Breast epithelium (tissue), 4 donors: ENCODE measurements at regions of chr12 and their contacts with region 1.

Region 1: DNA sequence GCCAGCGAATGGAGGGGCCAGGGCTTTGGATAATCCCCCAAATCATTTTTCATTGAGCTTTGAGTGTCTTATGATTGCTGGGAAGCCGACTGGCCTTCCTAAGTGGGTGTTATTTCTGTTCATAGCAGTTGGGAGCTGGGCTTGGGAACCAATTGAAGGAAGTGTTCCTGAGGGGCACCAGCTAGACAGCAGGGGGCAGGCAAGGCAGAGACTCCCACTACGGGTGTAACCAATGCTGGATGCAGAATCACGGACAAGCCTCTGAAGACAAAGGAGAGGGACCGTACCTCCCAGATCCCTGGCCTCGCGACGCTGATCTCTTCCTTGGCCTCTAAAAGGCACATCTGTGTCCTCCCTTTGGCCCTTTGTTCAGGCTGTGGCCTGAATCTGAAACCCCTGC is 148.9 kb upstream of the PRMT8 start:
- DNase-seq: no peak
- H3K4me3 ChIP-seq: no peak overlapping the region
- H3K27ac ChIP-seq: no peak overlapping the region
- H3K4me1 ChIP-seq: peaks cover 0 to 5% of the 10 kb centered on the region in 2 donors
- H3K27me3 ChIP-seq: no peaks in the 10 kb centered on the region
- CTCF ChIP-seq: no peak
- POLR2A ChIP-seq: no peak

Region 2: DNA sequence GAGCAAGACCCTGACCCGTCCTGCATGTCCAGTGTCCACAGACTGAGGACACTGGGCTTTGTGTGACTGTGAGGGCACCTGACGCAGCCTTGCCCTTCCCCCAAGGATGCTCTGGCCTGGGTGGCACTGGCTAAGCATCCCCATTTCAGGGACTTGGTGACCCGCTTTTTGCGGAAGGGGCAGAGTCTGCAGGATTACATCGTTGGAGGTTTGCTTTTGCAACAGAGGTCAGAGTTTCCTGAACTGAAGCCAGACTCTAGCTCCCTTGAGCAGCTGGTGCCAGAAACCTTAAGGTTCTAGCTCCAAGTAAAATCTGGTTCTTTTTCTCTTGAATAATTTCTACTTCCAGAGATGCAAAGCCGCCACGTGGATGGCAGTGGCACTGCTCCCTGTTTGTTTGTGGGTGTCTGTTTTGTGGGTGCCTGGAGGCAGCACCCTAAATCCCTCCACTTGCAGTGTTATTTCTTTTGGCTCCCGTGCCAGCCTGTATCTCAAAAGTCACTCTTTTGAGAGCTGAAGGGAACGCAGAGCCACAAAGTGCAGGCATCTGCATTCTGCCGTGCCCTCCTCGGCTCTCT is 80.2 kb before region 1 on chr12:
- intact Hi-C with region 1: loop called (anchors 2 kb)
- DNase-seq: no peak
- H3K4me3 ChIP-seq: no peak overlapping the region
- H3K27ac ChIP-seq: no peak overlapping the region
- H3K4me1 ChIP-seq: no peaks in the 10 kb centered on the region
- H3K27me3 ChIP-seq: no peaks in the 10 kb centered on the region
- CTCF ChIP-seq: no peak
- POLR2A ChIP-seq: no peak

Region 3: DNA sequence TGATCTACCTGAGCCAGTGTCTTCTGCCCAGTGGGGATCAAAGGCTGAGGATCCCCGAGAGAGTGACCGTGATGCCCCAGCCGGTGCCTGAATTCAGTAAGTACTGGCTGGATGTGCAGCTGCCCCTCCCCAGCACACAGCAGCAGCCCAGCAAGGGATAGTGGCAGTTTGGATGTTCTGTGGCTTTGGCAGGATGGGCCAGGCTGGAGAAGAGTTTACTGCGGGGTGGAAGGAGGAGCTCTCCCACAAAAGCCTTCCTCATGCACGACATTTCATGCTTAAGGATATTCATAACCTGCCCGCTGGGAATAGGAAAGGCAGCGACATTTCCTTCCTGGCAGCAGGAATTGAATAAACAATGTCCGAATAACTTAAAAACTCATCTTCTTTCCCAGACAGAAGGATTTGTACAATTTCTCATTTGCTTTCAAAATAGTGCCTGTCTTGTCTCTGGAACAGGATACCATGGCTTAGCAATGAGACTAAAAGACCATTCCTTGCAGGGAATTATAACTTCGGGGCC is 13.4 kb after region 1 on chr12:
- intact Hi-C with region 1: loop called (anchors 1 kb)
- DNase-seq: no peak
- H3K4me3 ChIP-seq: no peak overlapping the region
- H3K27ac ChIP-seq: no peak overlapping the region
- H3K4me1 ChIP-seq: no peaks in the 10 kb centered on the region
- H3K27me3 ChIP-seq: no peaks in the 10 kb centered on the region
- CTCF ChIP-seq: no peak
- POLR2A ChIP-seq: no peak